WTC11 (cell line): ENCODE measurements at regions of chr7 and their contacts with region 1.

Region 1: DNA sequence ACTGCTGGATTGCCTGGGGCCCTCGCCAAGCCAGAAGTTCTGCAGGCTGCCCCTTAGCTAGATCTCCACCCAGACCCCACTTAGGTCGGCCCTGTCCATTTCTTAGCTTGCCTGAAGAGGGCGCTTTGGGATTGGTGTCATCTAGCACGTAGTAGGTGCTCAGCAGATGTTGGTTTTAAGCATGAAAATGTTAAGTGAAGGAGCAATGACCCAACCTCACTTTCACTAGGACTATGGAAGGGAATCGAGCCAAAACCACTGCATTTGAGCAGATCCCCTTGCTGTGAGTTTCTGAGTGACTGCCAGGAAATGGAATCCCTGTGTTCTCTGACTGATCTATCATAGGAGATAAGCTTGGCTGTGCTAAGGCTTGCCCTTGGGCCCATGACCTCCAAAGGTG is 131.7 kb upstream of the EEPD1 start:
- DNase-seq: peak; percentile 72
- ATAC-seq: peak; percentile 99
- H3K4me3 Mint-ChIP-seq: no peak overlapping the region
- H3K27ac Mint-ChIP-seq: no peak overlapping the region
- H3K4me1 Mint-ChIP-seq: peaks cover 8% of the 10 kb centered on the region
- H3K27me3 Mint-ChIP-seq: no peaks in the 10 kb centered on the region
- CTCF ChIP-seq: peak; percentile 74

Region 2: DNA sequence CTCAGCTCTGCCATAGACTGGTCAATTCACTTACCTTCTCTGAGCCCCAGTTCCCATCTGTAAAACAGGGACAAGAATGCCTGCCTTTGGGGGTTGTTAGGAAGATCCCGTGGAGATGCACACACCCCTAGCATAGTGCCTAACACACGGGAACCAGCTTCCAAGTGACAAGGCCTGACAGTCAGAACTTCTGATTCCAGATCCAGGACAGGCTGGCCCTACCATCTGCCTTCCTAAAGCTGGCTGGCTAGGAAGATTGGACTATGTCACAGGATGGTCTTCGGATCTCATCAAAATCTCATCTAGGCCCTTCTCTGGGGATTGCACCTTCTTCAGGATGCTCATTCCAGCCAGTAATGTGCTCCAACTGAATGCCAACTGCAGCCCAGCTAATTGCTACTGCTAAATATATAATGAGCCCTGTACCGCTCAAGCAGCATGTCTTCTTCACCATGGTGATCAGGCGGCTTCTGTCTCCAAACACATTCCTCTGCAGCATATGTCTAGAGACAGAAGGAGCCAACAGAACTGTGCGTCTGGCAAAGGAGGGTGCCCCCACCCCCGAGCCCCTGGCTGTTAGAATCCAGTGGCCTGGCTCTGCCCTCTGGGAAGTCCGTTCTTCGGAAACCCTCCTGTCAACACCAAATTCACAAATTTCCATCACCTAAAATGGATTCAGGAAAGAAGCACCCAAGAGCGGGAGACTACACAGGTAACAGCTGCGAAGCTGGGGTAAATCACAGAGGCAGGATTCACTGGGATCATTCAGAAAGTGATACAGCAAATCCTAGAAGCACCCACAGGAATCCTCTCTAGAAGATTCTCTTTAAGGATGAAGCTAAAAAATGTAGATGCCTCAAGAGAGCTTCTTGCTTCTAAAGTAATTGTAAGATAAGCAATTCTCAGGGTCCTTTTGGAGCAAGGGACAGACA is 10.4 kb before region 1 on chr7:
- CTCF ChIA-PET with region 1: interaction called, 34 read pairs
- POLR2A ChIA-PET with region 1: no interaction called
- DNase-seq: no peak
- ATAC-seq: no peak
- H3K4me3 Mint-ChIP-seq: no peak overlapping the region
- H3K27ac Mint-ChIP-seq: no peak overlapping the region
- H3K4me1 Mint-ChIP-seq: peaks cover 12% of the 10 kb centered on the region
- H3K27me3 Mint-ChIP-seq: no peaks in the 10 kb centered on the region; the same call in 1 of the 2 replicates
- CTCF ChIP-seq: no peak

Region 3: DNA sequence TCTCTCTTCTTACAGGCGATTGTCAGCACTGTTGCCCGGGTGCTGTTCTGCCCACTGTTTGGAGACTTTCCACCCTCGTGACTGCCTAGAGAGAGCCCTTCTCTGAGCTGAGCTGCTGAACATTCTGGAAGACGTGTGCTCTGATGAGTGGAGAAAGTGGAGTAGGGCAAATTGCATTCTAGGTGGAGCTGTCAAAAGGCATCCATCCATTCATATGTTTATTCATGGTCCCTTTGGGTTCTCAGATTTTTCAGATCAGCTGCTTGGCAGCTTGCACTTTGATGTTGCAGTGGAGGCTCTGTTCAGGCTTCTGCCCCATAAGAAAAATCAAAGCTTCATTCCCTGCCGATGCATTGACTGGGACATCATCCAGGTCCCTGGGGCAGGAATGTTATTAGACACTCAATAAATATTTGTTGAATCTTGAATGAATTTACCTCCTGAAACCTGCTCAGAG is 11.0 kb after region 1 on chr7:
- CTCF ChIA-PET with region 1: interaction called, 25 read pairs
- POLR2A ChIA-PET with region 1: no interaction called
- DNase-seq: no peak
- ATAC-seq: no peak
- H3K4me3 Mint-ChIP-seq: no peak overlapping the region
- H3K27ac Mint-ChIP-seq: no peak overlapping the region
- H3K4me1 Mint-ChIP-seq: peaks cover 8% of the 10 kb centered on the region
- H3K27me3 Mint-ChIP-seq: no peaks in the 10 kb centered on the region
- CTCF ChIP-seq: no peak

Region 4: DNA sequence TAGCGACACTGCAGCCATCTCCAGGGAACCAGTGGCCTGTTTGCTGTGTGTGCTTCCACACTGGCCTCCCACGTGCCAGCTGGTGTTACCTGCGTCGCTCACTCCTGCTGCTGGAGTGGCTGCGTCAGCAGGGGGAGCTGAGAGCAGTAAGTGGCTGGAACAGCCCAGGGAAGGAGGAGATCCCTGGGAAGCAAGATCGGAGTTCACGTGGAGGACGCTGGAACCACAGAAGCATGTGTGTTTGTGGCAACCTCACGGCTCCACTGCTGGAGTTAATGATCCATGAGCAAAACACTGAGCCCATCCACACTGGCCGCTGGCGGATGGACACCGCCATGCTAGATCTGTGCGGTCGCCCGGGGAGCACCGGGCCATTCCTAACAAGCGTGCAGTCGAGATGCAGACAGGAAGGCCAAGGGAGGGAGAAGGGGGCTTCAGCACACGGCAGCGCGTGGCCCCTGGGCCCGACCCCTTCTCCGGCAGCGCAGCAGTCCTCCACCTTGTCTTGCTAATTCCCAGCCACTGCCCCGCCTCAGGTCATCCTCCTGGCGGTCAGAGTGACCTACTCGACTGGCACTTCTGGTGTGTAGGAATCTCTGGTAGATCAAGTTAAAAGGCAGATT is 63.2 kb after region 1 on chr7:
- CTCF ChIA-PET with region 1: interaction called, 10 read pairs
- POLR2A ChIA-PET with region 1: no interaction called
- DNase-seq: peak; percentile 70
- ATAC-seq: peak; percentile 90
- H3K4me3 Mint-ChIP-seq: no peak overlapping the region
- H3K27ac Mint-ChIP-seq: no peak overlapping the region
- H3K4me1 Mint-ChIP-seq: peaks cover 14% of the 10 kb centered on the region
- H3K27me3 Mint-ChIP-seq: peaks cover 12% of the 10 kb centered on the region
- CTCF ChIP-seq: no peak

Region 5: DNA sequence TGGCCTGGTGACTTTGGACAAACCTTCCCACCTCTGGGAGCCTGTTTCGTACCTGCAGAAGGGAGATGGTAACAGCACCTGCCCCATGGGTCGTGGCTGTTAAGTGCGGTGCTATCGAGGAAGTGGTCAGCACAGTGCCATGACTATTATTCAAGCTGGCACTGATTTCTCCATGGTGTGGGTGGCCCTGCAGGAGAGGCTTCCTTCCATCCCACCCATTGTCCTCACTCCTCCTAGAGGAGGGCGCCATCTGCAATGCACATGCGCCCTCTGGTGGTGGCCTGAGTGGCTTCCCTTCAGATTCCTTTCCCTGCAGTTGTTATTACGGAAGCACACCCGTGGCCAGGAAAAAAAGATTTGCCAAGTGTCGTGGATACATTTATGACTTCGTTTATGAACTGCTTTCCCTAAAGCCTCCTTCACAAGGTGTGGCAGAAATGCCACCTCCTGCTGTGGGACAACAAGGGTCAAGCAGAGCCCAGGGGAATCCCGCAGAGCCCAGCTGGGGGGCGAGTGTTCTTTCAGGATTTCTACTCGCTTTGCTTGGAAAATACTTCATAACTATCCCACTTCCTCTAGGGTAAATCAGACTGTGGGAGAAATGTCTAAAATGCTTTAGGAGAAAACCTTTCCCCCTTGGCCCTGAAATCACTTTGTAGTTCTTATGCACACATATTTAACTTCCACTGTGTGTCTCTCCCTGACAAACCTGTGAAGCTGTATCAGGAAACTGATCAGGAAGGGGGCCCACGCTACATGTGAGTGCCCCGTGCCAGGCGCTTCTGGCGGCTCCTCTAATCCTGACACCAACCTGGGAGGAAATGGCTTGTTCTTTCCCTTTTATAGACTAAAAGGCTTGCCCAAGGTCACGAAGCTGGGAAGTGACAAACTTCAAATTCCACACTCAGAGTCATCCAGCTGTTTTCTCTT is 270.3 kb after region 1 on chr7:
- CTCF ChIA-PET with region 1: interaction called, 13 read pairs
- POLR2A ChIA-PET with region 1: no interaction called
- DNase-seq: peak; percentile 83
- ATAC-seq: peak; percentile 84
- H3K4me3 Mint-ChIP-seq: no peak overlapping the region; the same call in 1 of the 2 replicates
- H3K27ac Mint-ChIP-seq: peak overlapping the region; percentile 64; the same call in 1 of the 2 replicates
- H3K4me1 Mint-ChIP-seq: peaks cover 27% of the 10 kb centered on the region
- H3K27me3 Mint-ChIP-seq: no peaks in the 10 kb centered on the region
- CTCF ChIP-seq: peak; percentile 98